PC-9 (cell line): ENCODE measurements at regions of chr5 and their contacts with region 1.

Region 1: DNA sequence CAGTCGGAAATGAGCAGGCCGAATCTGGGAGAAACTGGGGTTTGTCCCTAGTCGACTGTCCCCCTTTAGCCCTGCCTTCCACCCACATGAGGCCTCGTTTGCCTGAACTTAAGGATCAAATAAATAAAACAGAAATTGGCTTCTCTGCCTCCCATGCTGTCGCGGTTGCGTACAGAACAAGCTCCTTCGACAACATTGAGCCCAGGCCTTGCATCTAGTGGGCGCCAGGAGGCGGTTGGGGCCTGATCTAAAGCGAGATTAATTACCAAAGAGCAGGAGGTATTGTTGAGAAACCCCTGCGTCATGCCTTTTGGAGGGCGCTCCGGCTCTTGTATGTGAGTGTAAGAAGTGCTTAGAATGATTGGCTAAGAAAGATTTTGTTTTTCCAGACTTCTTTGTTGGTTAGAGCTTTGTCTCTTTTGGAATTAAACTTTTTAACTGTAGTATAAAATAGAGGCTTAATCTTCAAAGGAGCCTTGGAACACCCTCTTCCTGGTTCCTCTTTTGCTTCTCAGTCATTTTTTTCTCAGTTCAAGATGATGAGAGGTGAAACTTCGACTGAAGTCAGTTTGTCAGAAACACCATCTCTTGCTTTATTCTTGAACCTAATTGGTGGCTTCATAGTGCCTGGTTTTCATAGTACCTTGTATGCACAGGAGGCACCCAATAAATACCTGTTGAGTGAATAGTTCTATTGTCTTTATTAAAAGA is 827 bp downstream of the ATP6V0E1 start:
- DNase-seq: peak; percentile 63 to 79
- H3K4me3 ChIP-seq: peak overlapping the region; percentile 87
- H3K27ac ChIP-seq: peak overlapping the region; percentile 77
- H3K4me1 ChIP-seq: peaks cover 13% of the 10 kb centered on the region; the same call in 1 of the 2 replicates
- H3K27me3 ChIP-seq: no peaks in the 10 kb centered on the region
- CTCF ChIP-seq: peak; percentile 65

Region 2: GRCh38 chr5:173144200-173145176 is 160.1 kb after region 1 on chr5 and contains the start of gene BNIP1:
- CTCF ChIA-PET with region 1: interaction called, 12 read pairs
- POLR2A ChIA-PET with region 1: no interaction called
- intact Hi-C with region 1: loop called (anchors 1 kb)
- DNase-seq: peak; percentile 85 to 99
- H3K4me3 ChIP-seq: peak within 1 kb of the TSS; percentile 90
- H3K27ac ChIP-seq: peak within 1 kb of the TSS; percentile 73
- H3K4me1 ChIP-seq: no peaks in the 10 kb centered on the region
- H3K27me3 ChIP-seq: no peaks in the 10 kb centered on the region
- CTCF ChIP-seq: peak; percentile 84
- total RNA-seq, gene BNIP1: 13.3 and 13.5 TPM in 2 replicates

Region 3: DNA sequence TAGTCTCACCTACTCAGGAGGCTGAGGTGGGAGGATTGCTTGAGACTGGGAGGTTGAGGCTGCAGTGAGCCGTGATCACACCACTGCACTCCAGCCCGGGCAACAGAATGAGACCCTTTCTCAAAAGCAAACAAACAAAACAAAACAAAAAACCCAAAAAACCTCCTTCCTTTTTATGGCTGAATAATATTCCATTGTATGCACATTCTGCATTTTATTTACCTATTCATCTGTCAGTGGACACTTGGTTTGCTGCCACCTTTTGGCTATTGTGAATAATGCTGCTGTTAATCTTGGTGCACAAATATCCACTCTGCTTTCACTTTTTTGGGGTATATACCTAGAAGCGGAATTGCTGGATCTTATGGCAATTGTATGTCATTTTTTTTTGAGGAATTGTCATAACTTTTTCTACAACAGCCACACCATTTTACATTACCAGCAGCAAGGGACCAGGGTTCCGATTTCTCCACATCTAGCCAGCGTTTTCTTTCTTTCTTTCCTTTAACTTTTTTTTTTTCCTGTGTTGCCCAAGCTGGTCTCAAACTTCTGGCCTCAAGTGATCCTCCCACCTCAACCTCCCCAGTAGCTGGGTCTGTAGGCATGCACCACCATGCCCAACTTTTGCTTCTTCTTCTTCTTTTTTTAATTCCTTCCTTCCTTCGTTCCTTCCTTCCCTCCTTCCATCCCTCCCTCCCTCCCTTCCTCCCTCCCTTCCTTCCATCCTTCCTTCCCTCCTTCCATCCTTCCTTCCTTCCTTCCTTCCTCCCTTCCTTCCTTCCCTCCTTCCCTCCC is 220.0 kb after region 1 on chr5:
- CTCF ChIA-PET with region 1: no interaction called
- POLR2A ChIA-PET with region 1: no interaction called
- intact Hi-C with region 1: loop called (anchors 1 kb)
- DNase-seq: peak in 1 of 2 experiments; percentile 14
- H3K4me3 ChIP-seq: no peak overlapping the region
- H3K27ac ChIP-seq: no peak overlapping the region
- H3K4me1 ChIP-seq: peaks cover 18% of the 10 kb centered on the region
- H3K27me3 ChIP-seq: peaks cover 28% of the 10 kb centered on the region; the same call in 1 of the 2 replicates
- CTCF ChIP-seq: peak; percentile 75